WTC11 (cell line): ENCODE measurements at regions of chr15 and their contacts with region 1.

Region 1: DNA sequence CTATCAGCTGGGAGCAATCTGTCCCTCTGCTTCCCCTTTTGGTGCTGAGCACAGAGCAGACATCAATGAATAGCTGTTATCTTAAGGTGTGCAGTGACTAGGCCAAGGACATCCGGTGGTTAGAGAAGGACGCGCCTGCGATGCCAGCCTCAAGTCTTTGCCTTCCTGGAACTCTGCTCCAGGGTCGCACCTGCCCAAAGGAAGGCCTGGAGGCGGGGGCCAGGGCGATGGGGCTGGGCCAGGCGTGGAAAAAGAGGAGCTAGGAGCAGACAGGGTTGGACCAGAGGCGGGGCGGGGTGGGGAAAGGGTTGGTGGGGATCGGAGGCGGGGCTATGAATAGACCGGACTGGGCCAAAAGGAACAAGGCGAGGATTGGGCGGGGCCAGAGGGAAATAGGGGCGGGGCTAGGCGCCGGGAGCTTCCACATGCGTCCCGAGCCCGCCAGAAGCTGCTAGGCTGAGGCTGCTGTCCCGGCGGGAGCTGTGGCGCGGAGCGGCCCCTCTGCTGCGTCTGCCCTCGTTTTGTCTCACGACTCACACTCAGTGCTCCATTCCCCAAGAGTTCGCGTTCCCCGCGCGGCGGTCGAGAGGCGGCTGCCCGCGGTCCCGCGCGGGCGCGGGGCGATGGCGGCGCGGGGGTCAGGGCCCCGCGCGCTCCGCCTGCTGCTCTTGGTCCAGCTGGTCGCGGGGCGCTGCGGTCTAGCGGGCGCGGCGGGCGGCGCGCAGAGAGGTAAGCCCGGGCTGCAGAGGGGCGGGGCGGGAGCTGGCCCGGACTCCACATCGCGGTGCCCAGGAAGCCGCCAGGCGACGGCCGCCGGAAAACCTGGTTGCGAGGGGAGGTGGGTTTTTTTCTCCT is at the start of gene CHRNA5:
- DNase-seq: peak; percentile 100
- ATAC-seq: peak; percentile 96
- H3K4me3 Mint-ChIP-seq: peak within 1 kb of the TSS; percentile 90
- H3K27ac Mint-ChIP-seq: peak within 1 kb of the TSS; percentile 80
- H3K4me1 Mint-ChIP-seq: peaks cover 23% of the 10 kb centered on the region
- H3K27me3 Mint-ChIP-seq: no peaks in the 10 kb centered on the region; the same call in 1 of the 2 replicates
- CTCF ChIP-seq: no peak
- total RNA-seq, gene CHRNA5: 21.0 to 23.3 TPM (median 21.2 TPM) in 3 replicates

Region 2: GRCh38 chr15:78552597-78552996 is 12.7 kb before region 1 on chr15:
- CTCF ChIA-PET with region 1: interaction called, 4 read pairs
- POLR2A ChIA-PET with region 1: interaction called, 11 read pairs
- DNase-seq: no peak
- ATAC-seq: 0 out of 2 replicates have a peak, but pooled peaks have one; percentile 30
- H3K4me3 Mint-ChIP-seq: no peak overlapping the region
- H3K27ac Mint-ChIP-seq: no peak overlapping the region
- H3K4me1 Mint-ChIP-seq: peaks cover 4% of the 10 kb centered on the region
- H3K27me3 Mint-ChIP-seq: no peaks in the 10 kb centered on the region
- CTCF ChIP-seq: no peak